Lower leg skin (tissue), 4 donors: ENCODE measurements at regions of chr1 and their contacts with region 1.

Region 1: DNA sequence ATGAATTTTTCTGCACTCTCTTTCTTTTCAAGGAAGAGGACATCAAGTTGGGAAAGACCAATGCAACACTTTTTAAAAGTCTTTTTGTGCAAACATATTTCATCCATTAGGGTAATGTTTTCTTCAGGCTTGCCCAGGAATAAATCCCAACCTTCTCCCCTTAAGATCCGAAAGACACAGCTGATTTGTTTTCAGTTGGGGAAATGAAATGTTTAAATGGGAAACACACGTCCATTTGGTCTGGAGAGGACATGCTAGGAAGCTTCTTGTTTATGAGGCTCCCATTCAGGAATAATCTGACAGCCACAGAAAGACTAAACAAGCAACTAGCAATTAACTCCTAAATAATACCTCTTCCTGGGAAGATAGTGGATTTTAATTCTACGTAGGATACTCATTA is 91.9 kb downstream of the PRRX1 start:
- DNase-seq: no peak
- H3K4me3 ChIP-seq: no peak overlapping the region
- CTCF ChIP-seq: no peak
- POLR2A ChIP-seq: no peak

Region 2: GRCh38 chr1:170640581-170640980 is 115.2 kb before region 1 on chr1:
- intact Hi-C with region 1: no loop called
- DNase-seq: no peak
- H3K4me3 ChIP-seq: no peak overlapping the region
- CTCF ChIP-seq: no peak
- POLR2A ChIP-seq: no peak

Region 3: GRCh38 chr1:170707959-170708655 is 47.7 kb before region 1 on chr1:
- intact Hi-C with region 1: loop called (anchors 1 kb)
- DNase-seq: peak in 1 of 2 donors; percentile 35
- H3K4me3 ChIP-seq: no peak overlapping the region
- CTCF ChIP-seq: no peak
- POLR2A ChIP-seq: no peak